Common myeloid progenitor, CD34-positive (primary cell): ENCODE measurements at regions of chr2 and their contacts with region 1.

Region 1: GRCh38 chr2:28621172-28622100 is 125.6 kb downstream of the PLB1 start:
- DNase-seq: peak; percentile 96 to 97 (median 97)
- H3K4me3 ChIP-seq: peak overlapping the region in 4 of 7 experiments; percentile 14 to 54 (median 34)
- H3K27ac ChIP-seq: peak overlapping the region; percentile 96 to 98
- H3K4me1 ChIP-seq: peaks cover 22 to 77% (median 52%) of the 10 kb centered on the region in 4 experiments
- H3K27me3 ChIP-seq: no peaks in the 10 kb centered on the region

Region 2: GRCh38 chr2:28469304-28469703 is 152.1 kb before region 1 on chr2:
- CTCF ChIA-PET with region 1: no interaction called
- POLR2A ChIA-PET with region 1: no interaction called
- DNase-seq: no peak
- H3K4me3 ChIP-seq: no peak overlapping the region
- H3K27ac ChIP-seq: no peak overlapping the region
- H3K4me1 ChIP-seq: peaks cover 2 to 32% (median 8%) of the 10 kb centered on the region in 4 experiments
- H3K27me3 ChIP-seq: no peaks in the 10 kb centered on the region

Region 3: GRCh38 chr2:28610583-28611201 is 10.7 kb before region 1 on chr2:
- CTCF ChIA-PET with region 1: interaction called, 44 read pairs
- POLR2A ChIA-PET with region 1: interaction called, 4 read pairs
- DNase-seq: peak in 2 of 3 donors; percentile 54
- H3K4me3 ChIP-seq: no peak overlapping the region
- H3K27ac ChIP-seq: no peak overlapping the region
- H3K4me1 ChIP-seq: peaks cover 0 to 20% (median 13%) of the 10 kb centered on the region in 4 experiments
- H3K27me3 ChIP-seq: no peaks in the 10 kb centered on the region